ENCODE measurements at regions of chr16 and their contacts with region 1.

Region 1: DNA sequence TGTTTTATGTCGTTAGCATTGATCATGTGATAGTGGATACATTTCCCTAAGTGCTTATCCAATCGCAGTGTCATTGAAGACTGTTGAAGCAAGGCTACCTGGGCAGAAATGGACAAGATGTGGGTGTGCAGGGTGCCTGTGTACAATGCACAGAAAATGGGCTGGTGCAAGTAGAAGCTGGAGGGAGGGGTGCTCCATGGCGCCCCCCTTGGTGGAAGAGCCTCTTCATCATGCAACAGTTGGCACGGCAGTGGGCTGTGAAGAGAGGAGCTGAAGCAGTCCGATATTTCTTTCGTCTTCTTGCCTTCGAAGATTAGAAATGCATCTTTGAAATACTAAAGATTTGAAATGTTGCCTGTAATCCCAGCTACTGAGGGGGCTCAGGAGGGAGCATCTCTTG is 100.5 kb downstream of the PLCG2 start:
- DNase-seq: no peak
- H3K4me3 ChIP-seq: no peak overlapping the region
- H3K27ac ChIP-seq: no peak overlapping the region
- H3K4me1 ChIP-seq: no peaks in the 10 kb centered on the region
- H3K27me3 ChIP-seq: no peaks in the 10 kb centered on the region
- CTCF ChIP-seq: no peak

Region 2: DNA sequence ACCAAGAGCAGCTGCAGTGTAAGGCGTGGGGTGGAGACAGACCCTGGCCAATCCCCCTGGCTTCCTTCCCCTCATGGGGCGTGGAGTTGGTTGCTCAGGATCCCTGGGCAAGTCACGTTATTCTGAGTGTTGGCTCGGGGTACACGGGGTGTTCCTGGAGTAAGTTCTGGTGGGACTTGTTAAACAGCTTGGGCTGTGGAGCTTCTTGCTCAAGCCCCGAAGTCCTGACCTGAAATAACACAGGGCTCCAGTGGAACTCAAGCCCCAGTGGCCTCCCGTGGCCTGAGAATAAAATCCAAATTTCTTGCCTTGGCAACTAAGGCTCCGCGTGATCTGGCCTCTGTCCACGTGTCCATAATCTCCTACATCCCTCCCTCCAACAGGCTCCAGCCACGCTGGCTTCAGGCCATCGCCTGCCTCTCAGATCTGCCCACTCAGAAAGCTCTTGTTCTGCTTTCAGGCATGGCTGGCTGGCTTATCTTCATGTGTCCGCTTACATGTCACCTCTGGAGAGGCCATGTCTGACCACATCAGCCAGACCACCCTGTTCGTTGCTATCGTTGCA is 690.4 kb before region 1 on chr16:
- CTCF ChIA-PET with region 1: interaction called, 13 read pairs
- POLR2A ChIA-PET with region 1: no interaction called
- intact Hi-C with region 1: no loop called
- DNase-seq: no peak
- H3K4me3 ChIP-seq: no peak overlapping the region
- H3K27ac ChIP-seq: no peak overlapping the region
- H3K4me1 ChIP-seq: peaks cover 16% of the 10 kb centered on the region
- H3K27me3 ChIP-seq: no peaks in the 10 kb centered on the region
- CTCF ChIP-seq: no peak

Region 3: DNA sequence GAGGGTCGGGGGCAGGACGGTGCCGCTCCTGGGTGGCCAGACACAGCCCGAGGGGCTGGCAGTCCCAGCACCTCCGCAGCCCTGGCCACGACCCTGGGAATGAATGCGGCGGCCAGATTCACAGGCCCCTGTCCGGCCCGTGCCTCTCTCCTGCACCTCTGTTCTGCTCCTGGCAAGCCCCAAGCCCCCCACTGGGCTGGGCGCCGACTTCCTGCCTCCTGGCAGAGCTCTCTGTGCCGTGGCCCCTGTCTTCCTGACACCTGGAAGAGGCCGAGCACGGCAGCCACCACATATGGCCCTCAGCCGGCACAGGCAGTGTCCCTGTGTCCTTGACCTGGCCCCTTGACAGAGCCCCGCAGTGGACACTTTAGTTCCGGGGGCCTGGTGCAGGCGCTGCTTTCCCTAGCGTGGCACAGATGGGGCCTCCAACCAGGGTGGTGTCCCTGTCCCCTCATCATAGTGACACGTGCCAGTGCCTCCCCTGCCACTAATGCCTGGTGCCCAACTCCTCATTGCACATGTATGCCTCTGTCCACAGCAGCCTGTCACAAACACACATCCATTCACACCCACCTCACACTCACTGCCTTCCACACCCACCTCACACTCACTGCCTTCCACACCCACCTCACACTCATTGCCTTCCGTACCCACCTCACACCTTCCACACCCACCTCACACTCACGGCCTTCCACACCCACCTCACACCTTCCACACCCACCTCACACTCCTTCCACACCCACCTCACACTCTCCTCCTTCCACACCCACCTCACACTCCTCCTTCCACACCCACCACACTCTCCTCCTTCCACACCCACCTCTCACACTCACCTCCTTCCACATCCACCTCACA is 211.2 kb before region 1 on chr16:
- CTCF ChIA-PET with region 1: no interaction called
- POLR2A ChIA-PET with region 1: no interaction called
- intact Hi-C with region 1: no loop called
- DNase-seq: no peak
- H3K4me3 ChIP-seq: no peak overlapping the region
- H3K27ac ChIP-seq: no peak overlapping the region
- H3K4me1 ChIP-seq: no peaks in the 10 kb centered on the region
- H3K27me3 ChIP-seq: no peaks in the 10 kb centered on the region
- CTCF ChIP-seq: no peak